ENCODE measurements at regions of chr6 and their contacts with region 1.

Region 1: GRCh38 chr6:35573495-35574110 is 60.9 kb upstream of the TULP1 start:
- DNase-seq: no peak
- ATAC-seq: no peak

Region 2: DNA sequence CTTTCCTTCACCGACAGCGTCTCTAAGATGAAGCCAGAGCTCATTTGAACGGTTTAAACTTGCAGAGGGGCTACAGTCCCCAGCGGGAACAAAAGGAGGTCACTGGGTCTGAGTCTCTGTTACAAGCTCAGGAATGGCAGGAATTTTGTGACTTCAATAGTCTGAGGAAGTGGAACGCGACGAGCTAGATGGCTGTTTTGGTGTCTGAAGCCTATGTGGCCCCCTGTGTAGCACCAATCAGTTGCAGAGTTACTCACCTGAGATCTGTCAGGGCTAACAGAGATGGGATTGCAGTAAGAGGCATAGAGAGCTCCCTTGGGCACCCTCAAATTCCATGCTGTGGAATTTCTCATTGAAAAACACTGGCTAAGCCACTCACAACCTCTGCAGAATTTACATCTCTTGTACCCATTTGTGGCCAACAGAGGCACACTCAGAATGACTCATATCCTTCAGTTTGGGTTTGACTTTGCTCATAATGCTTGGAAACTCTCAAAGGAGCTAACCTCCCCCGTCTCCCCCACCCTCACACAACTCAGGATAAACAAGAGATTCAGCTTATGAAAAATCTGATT is 425.3 kb before region 1 on chr6:
- intact Hi-C with region 1: no loop called
- DNase-seq: no peak
- ATAC-seq: no peak

Region 3: GRCh38 chr6:35311390-35312075 is 262.1 kb before region 1 on chr6:
- intact Hi-C with region 1: no loop called
- DNase-seq: no peak
- ATAC-seq: no peak

Region 4: DNA sequence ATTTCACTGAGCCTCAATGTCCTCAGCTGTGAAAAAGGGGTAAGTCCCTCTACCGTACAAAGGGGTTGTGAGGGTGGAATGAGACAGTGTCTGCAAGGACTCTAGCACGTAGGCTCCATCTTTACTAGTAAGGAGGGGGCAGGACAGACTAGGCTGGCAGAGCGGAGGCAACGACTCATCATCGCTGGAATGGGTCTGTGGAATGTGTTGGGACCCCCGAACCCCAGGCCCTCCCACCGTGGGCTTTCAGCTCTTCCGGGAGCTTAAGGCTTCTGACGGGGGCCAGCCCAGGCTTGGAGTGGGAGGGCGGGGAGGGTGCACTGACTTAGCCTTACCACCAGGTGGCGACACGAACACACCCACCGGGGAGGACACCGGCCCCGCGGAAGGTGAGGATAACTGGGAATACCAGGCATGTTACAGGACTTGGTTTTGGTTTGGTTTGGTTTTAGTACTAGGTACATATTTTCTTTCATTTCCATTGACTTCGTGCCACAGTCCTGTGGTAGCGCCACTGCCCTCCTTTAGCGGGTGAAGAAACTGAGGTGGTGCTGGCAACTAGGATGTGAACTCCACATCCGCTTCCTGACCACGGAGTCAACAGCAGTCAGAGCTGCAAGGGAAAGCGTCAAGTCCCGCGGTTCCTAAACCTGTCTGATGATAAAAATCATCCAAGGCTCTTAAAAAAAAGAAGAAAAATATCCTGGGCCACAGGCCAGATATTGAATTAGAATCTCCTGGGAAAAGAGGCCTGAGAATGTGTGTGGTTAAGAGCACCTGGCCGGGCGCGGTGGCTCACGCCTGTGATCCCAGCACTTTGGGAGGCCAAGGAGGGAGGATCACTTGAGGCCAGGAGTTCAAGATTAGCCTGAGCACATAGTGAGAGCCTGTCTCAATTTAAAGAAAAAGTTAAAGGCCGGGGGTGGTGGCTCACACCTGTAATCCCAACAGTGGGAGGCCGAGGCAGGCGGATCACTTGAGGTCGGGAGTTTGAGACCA is 50.6 kb before region 1 on chr6:
- intact Hi-C with region 1: loop called in 1 of 2 experiments (anchors 10 kb)
- DNase-seq: peak; percentile 49 to 70
- ATAC-seq: peak; percentile 91

Measured in left colon (tissue), 2 donors.